ENCODE measurements at regions of chr12 and their contacts with region 1.

Region 1: DNA sequence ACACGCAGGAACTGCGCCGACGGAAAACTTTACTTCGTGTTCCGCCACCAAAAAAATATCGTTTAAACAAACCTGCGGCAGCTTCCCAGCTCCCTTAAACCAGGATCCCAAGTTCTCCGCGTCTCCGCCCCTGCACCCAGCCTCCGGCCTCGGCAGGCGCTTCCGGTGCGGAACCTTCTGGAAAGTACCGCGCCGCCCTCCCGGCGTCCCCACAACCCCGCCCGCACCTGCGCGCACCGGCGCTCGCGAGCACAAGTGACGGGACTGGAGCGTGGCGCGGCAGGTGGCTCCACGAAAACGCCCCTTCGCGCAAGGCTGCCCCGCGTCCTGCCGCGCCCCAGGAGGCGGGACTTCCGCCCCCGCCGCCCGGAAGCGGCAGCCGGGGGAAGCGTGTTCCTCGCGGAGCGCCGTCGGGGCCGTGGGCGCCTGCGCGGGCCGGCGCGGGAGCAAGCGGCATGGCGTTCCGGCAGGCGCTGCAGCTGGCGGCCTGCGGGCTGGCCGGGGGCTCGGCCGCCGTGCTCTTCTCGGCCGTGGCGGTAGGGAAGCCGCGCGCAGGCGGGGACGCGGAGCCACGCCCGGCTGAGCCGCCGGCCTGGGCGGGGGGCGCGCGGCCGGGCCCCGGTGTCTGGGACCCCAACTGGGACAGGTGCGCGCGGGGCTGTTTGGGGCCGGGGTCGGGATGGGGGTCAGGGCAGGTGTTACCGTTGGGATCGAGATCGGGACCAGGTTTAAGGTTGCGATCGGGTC is at the start of gene PGAM5:
- DNase-seq: peak; percentile 80 to 92 (median 85)
- ATAC-seq: peak; percentile 81 to 96 (median 94)
- H3K4me3 ChIP-seq: peak within 1 kb of the TSS; percentile 67 to 99 (median 84)
- H3K27ac ChIP-seq: peak within 1 kb of the TSS; percentile 44 to 92 (median 86)
- H3K4me1 ChIP-seq: peaks cover 0 to 23% (median 16%) of the 10 kb centered on the region in 12 donors
- H3K27me3 ChIP-seq: no peaks in the 10 kb centered on the region
- CTCF ChIP-seq: peak in 1 of 12 donors; percentile 7
- POLR2A ChIP-seq: peak in 1 of 2 donors; percentile 75
- total RNA-seq, gene PGAM5: 21.2 to 46.5 (median 27.6) TPM

Region 2: DNA sequence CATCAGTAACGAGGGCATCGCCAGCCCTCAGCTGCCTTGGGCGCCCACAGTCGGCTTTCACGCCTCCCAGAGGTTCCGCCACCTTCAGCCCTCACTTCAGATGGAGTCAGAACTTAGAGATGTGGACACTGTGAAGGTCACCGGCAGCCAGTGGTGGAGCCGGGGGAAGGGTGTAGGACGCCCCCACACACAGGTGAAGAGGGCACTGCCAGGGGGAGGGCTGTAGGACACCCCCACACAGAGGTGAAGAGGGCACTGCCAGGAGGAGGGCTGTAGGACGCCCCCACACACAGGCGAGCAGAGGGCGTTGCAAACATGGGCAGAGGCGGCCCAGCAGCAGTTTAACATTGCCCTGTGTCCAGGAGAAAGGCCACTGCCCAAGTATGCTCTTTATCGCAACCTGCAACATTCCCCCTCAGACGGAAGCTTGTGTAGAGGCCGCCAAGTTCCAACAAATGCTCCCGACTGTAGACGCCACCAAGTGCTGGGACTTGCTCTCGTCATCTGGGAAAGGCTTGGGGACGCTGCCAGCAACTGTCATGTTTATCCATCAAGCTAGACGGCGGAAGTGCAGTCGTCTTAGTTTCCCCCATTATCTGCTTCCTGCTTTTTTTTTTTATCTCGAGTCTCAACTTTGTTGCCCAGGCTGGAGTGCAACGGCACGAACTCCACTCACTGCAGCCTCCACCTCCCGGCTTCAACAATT is 55.9 kb after region 1 on chr12:
- intact Hi-C with region 1: loop called in 1 of 10 experiments (anchors 2 kb)
- DNase-seq: peak; percentile 72 to 88 (median 86)
- ATAC-seq: peak; percentile 12 to 56 (median 44)
- H3K4me3 ChIP-seq: peak overlapping the region in 5 of 12 donors; percentile 1 to 37 (median 16)
- H3K27ac ChIP-seq: peak overlapping the region; percentile 38 to 92 (median 66)
- H3K4me1 ChIP-seq: peaks cover 0 to 67% (median 26%) of the 10 kb centered on the region in 12 donors
- H3K27me3 ChIP-seq: no peaks in the 10 kb centered on the region
- CTCF ChIP-seq: no peak
- POLR2A ChIP-seq: no peak

Measured in heart left ventricle (tissue), 16 donors.